ENCODE measurements at regions of chr5 and their contacts with region 1.

Region 1: GRCh38 chr5:5886812-5887486 is 464.5 kb downstream of the ICE1 start:
- DNase-seq: peak; percentile 18 to 56 (median 36)
- ATAC-seq: peak; percentile 48
- H3K4me3 ChIP-seq: no peak overlapping the region
- H3K27ac ChIP-seq: no peak overlapping the region
- H3K4me1 ChIP-seq: no peaks in the 10 kb centered on the region
- H3K27me3 ChIP-seq: no peaks in the 10 kb centered on the region
- CTCF ChIP-seq: peak; percentile 49 to 75 (median 68)
- POLR2A ChIP-seq: no peak

Region 2: DNA sequence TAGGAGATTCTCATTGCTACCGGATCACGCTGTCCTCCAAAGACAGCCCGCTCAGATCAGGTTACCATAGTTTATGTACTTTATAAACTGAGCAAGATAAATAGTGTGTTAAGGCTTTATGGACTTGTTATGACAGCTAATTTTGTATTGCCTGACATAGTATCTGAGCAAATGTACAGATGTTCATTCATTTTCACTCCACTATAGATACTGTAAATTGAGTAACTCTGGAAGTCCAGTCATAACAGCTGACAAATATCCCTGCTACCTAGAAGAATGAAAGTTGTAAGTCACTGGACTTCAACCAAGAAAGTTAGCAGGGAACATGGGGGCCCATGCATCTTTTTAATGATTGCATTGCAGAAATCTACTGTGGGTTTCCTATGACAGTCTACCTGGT is 1039.2 kb before region 1 on chr5:
- intact Hi-C with region 1: no loop called
- DNase-seq: no peak
- ATAC-seq: no peak
- H3K4me3 ChIP-seq: no peak overlapping the region
- H3K27ac ChIP-seq: no peak overlapping the region
- H3K4me1 ChIP-seq: no peaks in the 10 kb centered on the region
- H3K27me3 ChIP-seq: no peaks in the 10 kb centered on the region
- CTCF ChIP-seq: no peak
- POLR2A ChIP-seq: no peak

Region 3: DNA sequence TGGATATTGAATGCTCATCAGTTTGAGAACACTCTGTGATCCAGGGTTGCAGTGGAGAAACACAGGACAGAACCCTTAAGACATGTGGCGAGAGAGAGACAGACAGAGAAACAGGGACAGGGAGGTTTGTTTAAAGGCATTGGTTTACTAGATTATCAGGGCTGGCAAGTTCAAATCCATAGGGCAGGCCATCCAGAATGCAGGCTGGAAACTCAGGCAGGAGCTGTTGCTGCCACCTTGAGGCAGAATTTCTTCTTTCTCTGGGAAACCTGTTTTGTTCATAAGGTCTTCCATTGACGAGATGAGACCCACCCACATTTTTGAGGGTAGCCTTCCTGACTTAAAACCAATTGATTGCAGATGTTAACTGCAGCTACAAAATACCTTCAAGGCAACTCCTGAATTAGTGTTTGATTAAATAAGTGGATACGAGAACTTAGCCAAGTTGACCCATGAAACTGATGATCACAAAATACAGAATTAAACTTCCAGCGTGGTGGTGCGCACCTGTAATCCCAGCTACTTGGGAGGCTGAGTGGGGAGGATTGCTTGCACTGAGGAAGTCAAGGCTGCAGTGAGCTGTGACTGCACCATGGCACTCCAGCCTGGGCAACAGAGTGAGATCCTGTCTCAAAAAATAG is 690.0 kb after region 1 on chr5:
- intact Hi-C with region 1: loop called (anchors 10 kb)
- DNase-seq: peak in 2 of 4 donors; percentile 35 to 39
- ATAC-seq: no peak
- H3K4me3 ChIP-seq: no peak overlapping the region
- H3K27ac ChIP-seq: no peak overlapping the region
- H3K4me1 ChIP-seq: no peaks in the 10 kb centered on the region
- H3K27me3 ChIP-seq: no peaks in the 10 kb centered on the region
- CTCF ChIP-seq: peak in 6 of 7 experiments; percentile 21 to 48 (median 44)
- POLR2A ChIP-seq: no peak